Natural killer cell (primary cell): ENCODE measurements at regions of chr1 and their contacts with region 1.

Region 1: DNA sequence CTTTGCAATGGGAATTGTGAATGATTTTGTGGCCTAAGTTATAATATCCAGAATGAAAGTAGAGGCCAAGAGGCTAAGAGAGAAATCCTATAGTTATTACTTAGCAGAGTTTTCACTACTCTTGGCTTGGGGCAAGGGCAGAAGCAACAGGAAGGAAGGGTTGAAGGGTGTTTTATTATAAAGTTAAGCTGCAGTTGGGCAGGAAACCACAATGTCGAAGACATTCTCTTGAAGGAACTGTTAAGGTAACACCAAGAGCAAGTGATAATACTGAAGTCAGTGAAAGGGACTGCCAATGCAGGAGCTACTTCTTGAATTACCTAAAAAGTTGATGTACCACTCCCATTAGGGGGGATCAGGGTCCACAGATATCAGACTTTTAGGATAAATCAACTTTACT is 8.3 kb downstream of the XCL2 start:
- DNase-seq: peak in 1 of 2 donors; percentile 75
- ATAC-seq: peak; percentile 87 to 97 (median 95)
- H3K4me3 ChIP-seq: peak overlapping the region; percentile 16
- H3K4me3 Mint-ChIP-seq: peak overlapping the region; percentile 91
- H3K27ac ChIP-seq: peak overlapping the region; percentile 84
- H3K27ac Mint-ChIP-seq: peak overlapping the region; percentile 88 to 91
- H3K4me1 ChIP-seq: peaks cover 25% of the 10 kb centered on the region
- H3K4me1 Mint-ChIP-seq: peaks cover 88 to 89% of the 10 kb centered on the region in 2 donors
- H3K27me3 ChIP-seq: no peaks in the 10 kb centered on the region
- H3K27me3 Mint-ChIP-seq: no peaks in the 10 kb centered on the region
- CTCF ChIP-seq: no peak

Region 2: GRCh38 chr1:168466092-168466713 is 69.3 kb before region 1 on chr1:
- intact Hi-C with region 1: loop called (anchors 5 kb)
- DNase-seq: peak in 1 of 2 donors; percentile 53
- ATAC-seq: peak; percentile 50 to 61 (median 58)
- H3K4me3 ChIP-seq: no peak overlapping the region
- H3K4me3 Mint-ChIP-seq: peak overlapping the region; percentile 84
- H3K27ac ChIP-seq: peak overlapping the region; percentile 52
- H3K27ac Mint-ChIP-seq: peak overlapping the region; percentile 74 to 90
- H3K4me1 ChIP-seq: peaks cover 29% of the 10 kb centered on the region
- H3K4me1 Mint-ChIP-seq: peaks cover 74 to 86% of the 10 kb centered on the region in 2 donors
- H3K27me3 ChIP-seq: no peaks in the 10 kb centered on the region
- H3K27me3 Mint-ChIP-seq: no peaks in the 10 kb centered on the region
- CTCF ChIP-seq: no peak

Region 3: GRCh38 chr1:168483539-168483938 is 52.0 kb before region 1 on chr1:
- intact Hi-C with region 1: loop called (anchors 5 kb)
- DNase-seq: no peak
- ATAC-seq: no peak
- H3K4me3 ChIP-seq: no peak overlapping the region
- H3K4me3 Mint-ChIP-seq: peak overlapping the region; percentile 5
- H3K27ac ChIP-seq: peak overlapping the region; percentile 16
- H3K27ac Mint-ChIP-seq: peak overlapping the region; percentile 73 to 87
- H3K4me1 ChIP-seq: peaks cover 31% of the 10 kb centered on the region
- H3K4me1 Mint-ChIP-seq: peaks cover 83 to 87% of the 10 kb centered on the region in 2 donors
- H3K27me3 ChIP-seq: no peaks in the 10 kb centered on the region
- H3K27me3 Mint-ChIP-seq: no peaks in the 10 kb centered on the region
- CTCF ChIP-seq: no peak

Region 4: GRCh38 chr1:168567007-168567406 is 31.5 kb after region 1 on chr1:
- intact Hi-C with region 1: loop called (anchors 5 kb)
- DNase-seq: no peak
- ATAC-seq: no peak
- H3K4me3 ChIP-seq: no peak overlapping the region
- H3K4me3 Mint-ChIP-seq: no peak overlapping the region
- H3K27ac ChIP-seq: no peak overlapping the region
- H3K27ac Mint-ChIP-seq: no peak overlapping the region
- H3K4me1 ChIP-seq: no peaks in the 10 kb centered on the region
- H3K4me1 Mint-ChIP-seq: peaks cover 0 to 2% of the 10 kb centered on the region in 2 donors
- H3K27me3 ChIP-seq: no peaks in the 10 kb centered on the region
- H3K27me3 Mint-ChIP-seq: peaks cover 0 to 5% of the 10 kb centered on the region in 2 donors
- CTCF ChIP-seq: no peak

Region 5: DNA sequence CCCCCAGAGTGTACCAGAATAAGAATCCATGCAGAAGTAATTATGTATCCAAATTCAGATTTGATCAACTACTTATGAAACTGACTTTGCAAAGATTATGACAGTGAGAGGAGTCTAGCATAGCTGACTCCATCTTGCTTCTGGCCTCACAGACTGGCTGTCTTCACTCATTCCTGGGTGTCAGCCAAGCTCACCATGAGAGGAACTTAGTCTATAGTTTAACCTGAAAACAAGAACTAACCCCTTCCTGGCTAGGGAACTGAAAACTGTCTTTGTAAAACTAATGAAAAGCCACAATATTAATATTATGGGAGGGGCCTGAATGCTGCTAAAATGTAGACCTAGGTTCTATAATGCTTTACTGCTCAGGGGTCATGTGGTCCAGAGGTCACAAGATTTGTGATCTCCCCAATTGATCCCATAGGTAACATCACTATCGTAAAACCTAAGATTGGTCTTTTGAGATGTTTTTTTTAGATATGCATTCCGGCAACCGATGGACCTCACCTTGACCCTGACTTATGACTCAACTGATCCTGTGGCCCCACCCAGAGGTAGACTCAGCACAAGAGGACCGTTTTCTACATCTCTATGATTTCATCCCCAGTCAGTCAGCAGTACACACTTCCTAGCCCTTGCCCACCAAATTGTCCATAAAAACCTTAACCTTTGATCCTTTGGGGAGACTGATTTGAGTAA is 626.1 kb after region 1 on chr1:
- intact Hi-C with region 1: no loop called
- DNase-seq: no peak
- ATAC-seq: no peak
- H3K4me3 ChIP-seq: no peak overlapping the region
- H3K4me3 Mint-ChIP-seq: no peak overlapping the region
- H3K27ac ChIP-seq: no peak overlapping the region
- H3K27ac Mint-ChIP-seq: no peak overlapping the region
- H3K4me1 ChIP-seq: no peaks in the 10 kb centered on the region
- H3K4me1 Mint-ChIP-seq: no peaks in the 10 kb centered on the region
- H3K27me3 ChIP-seq: no peaks in the 10 kb centered on the region
- H3K27me3 Mint-ChIP-seq: no peaks in the 10 kb centered on the region
- CTCF ChIP-seq: no peak